Activated T-helper 2 cell treated with anti-CD3 and anti-CD28 coated beads, Interferon-gamma antibody, Interleukin-2, Interleukin-4, amounts not matched to agents 10 μg/mL and 5 μg/mL and 100 μg/mL, durations not matched to agents 14 hours and 24 hours and 36 hours (primary cell): ENCODE measurements at regions of chr14 and their contacts with region 1.

Region 1: DNA sequence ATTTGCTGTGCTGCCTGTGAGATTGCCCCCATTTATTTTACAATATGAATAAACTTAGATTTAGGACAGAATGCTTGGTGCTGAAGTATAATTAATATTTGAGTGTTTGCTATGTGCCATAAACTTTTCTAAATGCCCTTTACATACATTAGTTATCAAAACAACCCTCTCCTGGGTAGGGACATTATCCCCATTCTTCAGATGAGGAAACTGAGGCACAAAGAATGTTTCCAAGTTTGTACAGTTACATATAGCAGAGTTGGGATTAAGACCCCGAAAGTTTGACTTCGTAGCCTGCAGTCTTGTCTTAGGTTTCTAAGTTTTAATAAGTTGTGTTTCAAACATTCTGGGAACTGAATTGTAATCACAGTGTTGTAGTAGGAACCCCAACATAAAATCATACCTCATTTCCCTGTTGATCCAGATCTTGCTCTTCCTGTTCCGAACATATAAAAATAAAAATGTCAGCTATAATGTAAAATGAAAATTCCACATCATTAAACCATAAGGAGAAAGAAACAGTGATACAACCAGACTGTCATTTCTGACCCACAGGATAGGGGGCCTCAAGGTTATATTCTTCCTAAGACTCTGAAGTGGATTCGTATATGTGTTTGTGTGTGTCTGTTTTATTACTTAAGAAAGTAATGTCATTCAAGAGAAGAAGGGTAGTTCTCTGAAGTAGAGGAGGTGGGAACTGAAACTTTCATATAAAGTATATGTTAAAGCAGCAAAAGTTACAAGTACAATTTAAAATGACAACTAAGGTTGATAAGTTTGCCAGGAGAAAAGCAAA is 18.6 kb downstream of the KLHDC2 start:
- DNase-seq: no peak
- H3K4me3 Mint-ChIP-seq: no peak overlapping the region
- H3K27ac Mint-ChIP-seq: peak overlapping the region; percentile 25
- H3K4me1 Mint-ChIP-seq: peaks cover 3% of the 10 kb centered on the region
- H3K27me3 Mint-ChIP-seq: no peaks in the 10 kb centered on the region

Region 2: DNA sequence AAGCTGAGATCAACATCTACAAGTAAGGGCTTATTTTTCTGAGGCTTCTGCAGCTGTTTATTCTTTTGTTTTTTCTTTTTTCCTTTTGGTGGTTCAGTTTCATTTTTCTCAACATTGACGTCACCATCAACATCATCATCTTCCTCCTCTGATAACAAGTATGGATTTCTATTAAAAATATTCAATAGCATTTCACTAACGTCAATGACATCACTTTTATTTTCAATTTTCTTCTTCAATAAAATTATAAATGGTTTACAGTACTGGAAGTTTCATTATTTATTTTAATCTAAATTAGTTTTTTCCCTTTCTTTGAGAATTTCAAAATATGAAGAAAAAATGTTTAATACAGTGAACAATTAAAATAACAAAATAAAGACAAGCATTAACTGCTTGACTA is 42.1 kb after region 1 on chr14:
- intact Hi-C with region 1: loop called (anchors 10 kb)
- DNase-seq: no peak
- H3K4me3 Mint-ChIP-seq: no peak overlapping the region
- H3K27ac Mint-ChIP-seq: no peak overlapping the region
- H3K4me1 Mint-ChIP-seq: no peaks in the 10 kb centered on the region
- H3K27me3 Mint-ChIP-seq: no peaks in the 10 kb centered on the region